ENCODE measurements at regions of chr5 and their contacts with region 1.

Region 1: DNA sequence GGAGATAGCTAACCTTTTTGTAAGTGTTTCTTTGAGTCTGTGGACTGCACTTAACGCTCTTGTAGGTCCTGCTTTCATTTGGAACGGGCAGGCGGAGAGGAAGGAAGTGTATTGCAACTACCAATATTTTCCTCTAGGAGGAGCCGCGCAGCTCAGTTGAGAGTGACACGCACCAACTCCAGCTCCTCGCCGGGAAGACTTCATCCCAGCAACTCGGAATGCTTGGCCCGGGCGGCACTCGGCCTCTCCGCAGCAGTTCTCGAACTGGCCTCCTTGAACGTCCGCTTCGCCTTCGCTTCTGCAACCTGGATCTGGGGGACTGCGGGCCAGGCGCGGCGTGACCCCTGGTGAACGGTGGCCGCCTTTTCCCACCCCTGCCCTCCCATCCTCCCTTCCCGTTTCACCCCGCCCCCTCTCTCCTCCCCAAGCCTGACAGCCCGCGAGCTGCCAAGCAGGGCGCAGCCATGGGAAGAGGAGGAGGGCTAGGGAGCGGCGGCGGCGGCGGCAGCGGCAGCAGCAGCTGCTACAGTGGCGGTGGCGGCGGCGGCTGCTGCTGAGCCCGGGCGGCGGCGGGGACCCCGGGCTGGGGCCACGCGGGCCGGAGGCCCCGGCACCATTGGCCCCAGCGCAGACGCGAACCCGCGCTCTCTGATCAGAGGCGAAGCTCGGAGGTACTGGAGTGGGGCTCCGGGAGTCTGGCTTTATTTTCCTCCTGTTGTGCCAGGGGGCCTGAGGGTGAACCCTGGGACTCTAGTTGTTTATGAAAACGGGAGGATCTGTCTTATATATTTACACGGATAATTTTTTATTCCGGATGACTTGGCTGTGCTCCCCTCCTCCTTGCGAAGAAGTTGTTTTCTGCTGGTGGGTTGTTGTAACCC is at the start of gene GHR:
- DNase-seq: peak; percentile 80
- H3K4me3 ChIP-seq: peak within 1 kb of the TSS; percentile 37 to 78 (median 57)
- H3K27ac ChIP-seq: peak within 1 kb of the TSS; percentile 22 to 86 (median 81)
- H3K4me1 ChIP-seq: peaks cover 0 to 33% (median 18%) of the 10 kb centered on the region in 6 donors
- H3K27me3 ChIP-seq: peaks cover 0 to 39% (median 11%) of the 10 kb centered on the region in 7 donors
- CTCF ChIP-seq: peak in 9 of 11 experiments; percentile 50 to 81 (median 69)
- POLR2A ChIP-seq: no peak
- total RNA-seq, gene GHR: 3.1 to 11.5 (median 6.8) TPM

Region 2: DNA sequence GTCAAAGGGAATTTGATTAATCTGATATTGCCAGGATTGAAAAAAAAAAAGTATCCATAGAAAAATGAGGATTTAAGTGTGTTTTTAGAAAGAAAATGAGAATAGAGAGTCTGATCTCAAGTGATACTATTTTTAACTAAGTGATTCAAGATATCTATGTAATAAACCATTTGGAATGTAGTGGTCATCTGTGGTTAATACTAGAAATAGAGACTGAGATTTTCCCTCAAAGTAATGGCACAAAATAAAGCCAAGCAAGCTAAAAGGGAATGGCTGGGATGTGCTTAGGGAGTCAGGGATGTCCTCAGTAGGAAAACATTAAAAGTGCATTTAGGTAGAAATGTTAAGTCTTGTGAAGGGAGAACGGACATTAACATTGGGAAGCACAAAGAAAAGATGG is 407.8 kb before region 1 on chr5:
- intact Hi-C with region 1: no loop called
- DNase-seq: no peak
- H3K4me3 ChIP-seq: no peak overlapping the region
- H3K27ac ChIP-seq: no peak overlapping the region
- H3K4me1 ChIP-seq: no peaks in the 10 kb centered on the region
- H3K27me3 ChIP-seq: peaks cover 0 to 9% (median 0%) of the 10 kb centered on the region in 7 donors
- CTCF ChIP-seq: no peak
- POLR2A ChIP-seq: no peak

Region 3: GRCh38 chr5:42570966-42571960 is 147.7 kb after region 1 on chr5:
- intact Hi-C with region 1: loop called (anchors 10 kb)
- DNase-seq: no peak
- H3K4me3 ChIP-seq: no peak overlapping the region
- H3K27ac ChIP-seq: no peak overlapping the region
- H3K4me1 ChIP-seq: peaks cover 0 to 3% (median 0%) of the 10 kb centered on the region in 6 donors
- H3K27me3 ChIP-seq: no peaks in the 10 kb centered on the region
- CTCF ChIP-seq: no peak
- POLR2A ChIP-seq: no peak